Natural killer cell (primary cell): ENCODE measurements at regions of chr9 and their contacts with region 1.

Region 1: GRCh38 chr9:129177791-129178559 is at the start of gene IER5L:
- DNase-seq: peak; percentile 94 to 95
- ATAC-seq: peak; percentile 89 to 95 (median 92)
- H3K4me3 ChIP-seq: peak within 1 kb of the TSS; percentile 76
- H3K4me3 Mint-ChIP-seq: peak within 1 kb of the TSS; percentile 91
- H3K27ac ChIP-seq: no peak within 1 kb of the TSS
- H3K27ac Mint-ChIP-seq: peak within 1 kb of the TSS in 1 of 2 donors; percentile 83
- H3K4me1 ChIP-seq: peaks cover 42% of the 10 kb centered on the region
- H3K4me1 Mint-ChIP-seq: peaks cover 6 to 37% of the 10 kb centered on the region in 2 donors
- H3K27me3 ChIP-seq: peaks cover 13% of the 10 kb centered on the region
- H3K27me3 Mint-ChIP-seq: peaks cover 5 to 7% of the 10 kb centered on the region in 2 donors
- CTCF ChIP-seq: no peak
- total RNA-seq, gene IER5L: 1.4 to 3.9 (median 2.8) TPM

Region 2: GRCh38 chr9:127686461-127687393 is 1491.2 kb before region 1 on chr9:
- intact Hi-C with region 1: no loop called
- DNase-seq: no peak
- ATAC-seq: no peak
- H3K4me3 ChIP-seq: no peak overlapping the region
- H3K4me3 Mint-ChIP-seq: no peak overlapping the region
- H3K27ac ChIP-seq: no peak overlapping the region
- H3K27ac Mint-ChIP-seq: no peak overlapping the region
- H3K4me1 ChIP-seq: no peaks in the 10 kb centered on the region
- H3K4me1 Mint-ChIP-seq: no peaks in the 10 kb centered on the region
- H3K27me3 ChIP-seq: no peaks in the 10 kb centered on the region
- H3K27me3 Mint-ChIP-seq: no peaks in the 10 kb centered on the region
- CTCF ChIP-seq: no peak

Region 3: GRCh38 chr9:129164246-129164930 is 13.6 kb before region 1 on chr9:
- intact Hi-C with region 1: no loop called
- DNase-seq: no peak
- ATAC-seq: no peak
- H3K4me3 ChIP-seq: no peak overlapping the region
- H3K4me3 Mint-ChIP-seq: no peak overlapping the region
- H3K27ac ChIP-seq: no peak overlapping the region
- H3K27ac Mint-ChIP-seq: no peak overlapping the region
- H3K4me1 ChIP-seq: peaks cover 12% of the 10 kb centered on the region
- H3K4me1 Mint-ChIP-seq: no peaks in the 10 kb centered on the region
- H3K27me3 ChIP-seq: no peaks in the 10 kb centered on the region
- H3K27me3 Mint-ChIP-seq: peaks cover 7% of the 10 kb centered on the region in 2 donors
- CTCF ChIP-seq: no peak

Region 4: GRCh38 chr9:129221233-129221632 is 43.3 kb after region 1 on chr9:
- intact Hi-C with region 1: loop called (anchors 5 kb)
- DNase-seq: peak in 1 of 2 donors; percentile 75
- ATAC-seq: peak; percentile 67 to 85 (median 83)
- H3K4me3 ChIP-seq: no peak overlapping the region
- H3K4me3 Mint-ChIP-seq: peak overlapping the region; percentile 80
- H3K27ac ChIP-seq: peak overlapping the region; percentile 67
- H3K27ac Mint-ChIP-seq: peak overlapping the region; percentile 64 to 73
- H3K4me1 ChIP-seq: peaks cover 73% of the 10 kb centered on the region
- H3K4me1 Mint-ChIP-seq: peaks cover 37 to 67% of the 10 kb centered on the region in 2 donors
- H3K27me3 ChIP-seq: no peaks in the 10 kb centered on the region
- H3K27me3 Mint-ChIP-seq: no peaks in the 10 kb centered on the region
- CTCF ChIP-seq: no peak

Region 5: GRCh38 chr9:129237195-129237611 is 59.2 kb after region 1 on chr9:
- intact Hi-C with region 1: no loop called
- DNase-seq: peak in 1 of 2 donors; percentile 65
- ATAC-seq: peak in 1 of 3 donors; percentile 49
- H3K4me3 ChIP-seq: no peak overlapping the region
- H3K4me3 Mint-ChIP-seq: peak overlapping the region; percentile 21
- H3K27ac ChIP-seq: no peak overlapping the region
- H3K27ac Mint-ChIP-seq: no peak overlapping the region
- H3K4me1 ChIP-seq: peaks cover 30% of the 10 kb centered on the region
- H3K4me1 Mint-ChIP-seq: peaks cover 11 to 48% of the 10 kb centered on the region in 2 donors
- H3K27me3 ChIP-seq: no peaks in the 10 kb centered on the region
- H3K27me3 Mint-ChIP-seq: no peaks in the 10 kb centered on the region
- CTCF ChIP-seq: no peak

Region 6: DNA sequence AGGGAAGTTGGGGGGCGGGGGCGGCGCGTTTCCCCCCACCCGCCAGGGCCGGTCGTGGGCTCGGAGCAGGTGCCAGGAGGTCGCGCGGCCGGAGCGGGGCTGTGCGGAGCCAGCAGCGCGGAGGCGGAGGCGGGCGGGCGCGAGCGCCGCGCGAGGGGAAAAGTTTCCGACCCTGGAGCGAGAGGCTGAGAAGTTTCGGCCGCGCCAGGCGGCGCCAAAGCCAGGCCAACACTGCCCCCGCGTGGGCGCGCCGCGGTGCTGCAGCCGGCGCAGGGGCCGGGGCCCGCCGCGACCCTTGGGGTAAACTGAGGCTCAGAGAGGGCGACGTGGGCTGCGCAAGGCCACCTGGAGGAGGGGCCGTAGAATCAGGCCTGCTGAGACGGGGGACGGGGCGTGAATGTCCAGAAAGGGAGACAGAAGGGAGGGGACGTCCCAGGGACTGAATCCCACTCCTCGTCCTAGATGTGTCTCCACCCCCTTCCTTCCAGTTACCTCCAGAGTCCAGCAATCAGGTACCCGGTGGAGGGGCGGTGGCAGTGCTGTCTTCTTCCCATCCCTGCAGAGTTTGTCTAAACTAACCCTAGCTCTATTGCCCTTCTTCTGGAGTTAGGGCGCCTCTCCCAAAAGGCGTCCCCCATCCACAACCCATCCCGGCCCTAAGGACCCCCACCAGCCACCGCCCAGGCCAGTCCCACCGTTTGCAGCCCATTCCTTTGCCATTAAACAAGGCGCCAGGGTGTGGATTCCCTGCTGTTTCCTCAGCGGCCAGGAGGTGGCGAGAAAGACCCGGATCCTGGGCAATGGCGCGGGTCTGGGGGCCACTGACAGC is 432.7 kb after region 1 on chr9:
- intact Hi-C with region 1: loop called (anchors 1 kb)
- DNase-seq: peak; percentile 71 to 85
- ATAC-seq: peak; percentile 72 to 87 (median 78)
- H3K4me3 ChIP-seq: peak overlapping the region; percentile 33
- H3K4me3 Mint-ChIP-seq: peak overlapping the region; percentile 62
- H3K27ac ChIP-seq: peak overlapping the region; percentile 37
- H3K27ac Mint-ChIP-seq: peak overlapping the region in 1 of 2 donors; percentile 96
- H3K4me1 ChIP-seq: peaks cover 43% of the 10 kb centered on the region
- H3K4me1 Mint-ChIP-seq: peaks cover 28 to 47% of the 10 kb centered on the region in 2 donors
- H3K27me3 ChIP-seq: no peaks in the 10 kb centered on the region
- H3K27me3 Mint-ChIP-seq: peaks cover 0 to 3% of the 10 kb centered on the region in 2 donors
- CTCF ChIP-seq: peak; percentile 98